ENCODE measurements at regions of chr16 and their contacts with region 1.

Region 1: GRCh38 chr16:57519796-57520360 is 16.5 kb downstream of the CCDC102A start:
- DNase-seq: peak; percentile 89

Region 2: GRCh38 chr16:57422026-57422944 is 97.6 kb before region 1 on chr16:
- intact Hi-C with region 1: loop called (anchors 2 kb)
- DNase-seq: no peak

Region 3: DNA sequence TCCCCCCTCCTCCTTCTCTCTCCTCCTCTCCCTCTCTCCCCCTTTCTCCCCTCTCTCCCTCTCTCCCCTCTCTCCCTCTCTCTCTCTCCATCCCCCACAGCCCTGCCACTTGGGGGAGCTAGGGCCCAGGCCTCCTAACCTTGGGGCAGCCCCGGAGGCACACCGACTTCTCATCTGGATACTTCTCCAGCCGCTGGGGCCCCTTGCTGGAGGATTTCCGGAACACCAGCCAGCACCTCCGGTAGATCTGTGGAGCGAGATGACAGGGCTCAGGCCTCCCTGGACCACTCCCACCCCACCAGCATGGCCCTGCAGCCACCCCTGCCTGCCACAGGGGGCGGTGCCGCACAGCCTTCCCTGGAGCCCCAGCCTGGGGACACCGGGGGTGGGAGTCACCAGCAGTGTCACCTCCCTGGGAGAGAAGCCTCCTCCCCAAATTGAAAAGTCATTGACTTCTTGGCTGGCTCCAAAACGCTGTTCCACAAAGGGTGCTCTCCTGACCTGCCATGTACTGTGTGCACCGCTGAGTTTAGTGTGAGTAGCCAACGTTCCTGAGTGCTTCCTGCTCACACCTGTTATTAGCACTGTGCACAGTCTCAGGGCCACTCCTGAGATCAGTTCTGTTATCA is 44.1 kb before region 1 on chr16:
- intact Hi-C with region 1: loop called (anchors 5 kb)
- DNase-seq: peak; percentile 81

Measured in cardiac septum (tissue), 1 donor.